ENCODE measurements at regions of chr3 and their contacts with region 1.

Region 1: DNA sequence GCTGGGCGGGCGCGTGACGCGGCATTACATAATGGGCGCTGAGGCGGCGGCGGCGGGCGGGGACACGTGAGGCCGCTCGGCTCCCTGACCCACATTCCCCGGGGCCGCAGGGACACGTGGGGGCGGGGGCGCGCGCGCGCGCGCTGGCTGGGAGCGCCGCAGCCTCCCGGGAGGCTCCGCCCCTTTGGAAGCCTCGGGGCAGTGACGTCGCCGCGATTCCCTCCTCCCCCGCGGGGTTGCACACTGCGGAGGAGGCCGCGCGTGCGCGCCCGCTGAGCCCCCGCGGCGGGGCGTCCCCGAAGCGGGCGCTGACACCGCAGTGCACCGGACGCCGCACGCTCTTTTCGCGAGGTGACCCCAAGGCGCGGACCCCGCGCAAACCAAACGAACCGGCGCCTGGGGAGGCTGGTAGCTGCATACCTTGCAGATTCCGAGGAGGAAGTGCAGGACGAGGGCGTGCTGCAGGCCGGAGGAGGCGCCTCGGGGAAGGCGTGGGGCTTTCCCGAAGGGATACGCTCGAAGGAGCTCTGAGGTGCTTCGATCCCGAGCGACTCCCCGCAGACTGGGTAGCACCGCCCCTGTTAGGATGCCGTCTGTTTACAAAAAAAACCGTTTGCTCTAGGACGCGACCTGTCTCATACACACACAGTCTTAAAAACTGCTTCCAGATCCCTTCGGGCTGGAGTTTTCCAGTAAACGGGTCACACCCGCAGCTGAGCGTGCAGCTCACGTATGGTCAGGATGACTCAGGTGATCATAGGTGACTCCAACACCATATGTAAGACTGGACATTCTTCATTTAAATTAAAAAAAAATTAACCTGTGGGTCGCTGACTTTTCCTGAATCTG is 1.0 kb downstream of the NR1D2 start:
- DNase-seq: peak; percentile 82
- ATAC-seq: peak; percentile 78
- H3K4me3 ChIP-seq: peak overlapping the region; percentile 67 to 72
- H3K27ac ChIP-seq: peak overlapping the region; percentile 89
- H3K4me1 ChIP-seq: peaks cover 46 to 56% of the 10 kb centered on the region in 2 experiments
- H3K27me3 ChIP-seq: no peaks in the 10 kb centered on the region
- CTCF ChIP-seq: no peak
- POLR2A ChIP-seq: no peak
- RAD21 ChIP-seq: no peak

Region 2: DNA sequence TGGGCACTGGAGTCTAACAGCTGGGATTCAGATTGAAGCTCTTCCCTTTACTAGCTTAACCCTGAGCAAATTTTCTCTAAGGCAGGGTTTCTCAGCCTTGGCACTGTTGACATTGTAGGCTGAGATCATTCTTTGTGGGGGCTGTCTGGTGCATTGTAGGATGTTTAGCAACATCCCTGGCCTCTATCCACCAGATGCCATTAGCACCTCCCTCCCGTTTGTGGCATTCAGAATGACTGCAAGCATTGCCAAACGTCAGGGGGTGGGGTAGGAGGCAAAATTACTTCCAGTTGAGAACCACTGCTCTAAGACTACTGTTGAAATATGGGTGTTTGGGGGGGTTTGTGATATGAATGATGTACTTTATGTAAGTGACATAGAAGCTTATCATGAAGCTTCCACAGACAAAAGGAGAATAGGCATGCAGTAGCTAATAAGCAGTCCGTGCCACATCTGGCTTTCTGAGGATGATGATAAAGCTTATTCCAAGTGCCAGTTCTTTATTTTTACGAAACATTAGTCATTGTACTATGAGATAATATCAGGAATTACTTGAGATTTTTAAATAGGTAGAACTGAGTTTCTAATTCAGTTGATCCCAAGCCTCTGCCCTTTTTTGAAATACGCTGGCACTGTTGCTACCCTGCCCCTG is 68.7 kb before region 1 on chr3:
- CTCF ChIA-PET with region 1: no interaction called
- POLR2A ChIA-PET with region 1: no interaction called
- RAD21 ChIA-PET with region 1: no interaction called
- intact Hi-C with region 1: no loop called
- DNase-seq: no peak
- ATAC-seq: no peak
- H3K4me3 ChIP-seq: no peak overlapping the region
- H3K27ac ChIP-seq: no peak overlapping the region
- H3K4me1 ChIP-seq: no peaks in the 10 kb centered on the region
- H3K27me3 ChIP-seq: no peaks in the 10 kb centered on the region
- CTCF ChIP-seq: no peak
- POLR2A ChIP-seq: no peak
- RAD21 ChIP-seq: no peak

Region 3: GRCh38 chr3:23916886-23917678 is 29.0 kb before region 1 on chr3 and contains the starts of genes NKIRAS1 and RPL15:
- CTCF ChIA-PET with region 1: no interaction called
- POLR2A ChIA-PET with region 1: interaction called, 20 read pairs
- RAD21 ChIA-PET with region 1: no interaction called
- intact Hi-C with region 1: loop called (anchors 1 kb)
- DNase-seq: peak; percentile 91
- ATAC-seq: peak; percentile 91
- H3K4me3 ChIP-seq: peak within 1 kb of the TSS; percentile 87 to 97
- H3K27ac ChIP-seq: peak within 1 kb of the TSS; percentile 83
- H3K4me1 ChIP-seq: peaks cover 14 to 23% of the 10 kb centered on the region in 2 experiments; a peak in 3 of 4 replicates
- H3K27me3 ChIP-seq: no peaks in the 10 kb centered on the region
- CTCF ChIP-seq: peak in 1 of 3 experiments; percentile 38; a peak in 2 of 6 replicates
- POLR2A ChIP-seq: peak; percentile 99
- RAD21 ChIP-seq: no peak
- total RNA-seq, gene NKIRAS1: 12.0 TPM
- total RNA-seq, gene RPL15: 2,177 TPM

Region 4: DNA sequence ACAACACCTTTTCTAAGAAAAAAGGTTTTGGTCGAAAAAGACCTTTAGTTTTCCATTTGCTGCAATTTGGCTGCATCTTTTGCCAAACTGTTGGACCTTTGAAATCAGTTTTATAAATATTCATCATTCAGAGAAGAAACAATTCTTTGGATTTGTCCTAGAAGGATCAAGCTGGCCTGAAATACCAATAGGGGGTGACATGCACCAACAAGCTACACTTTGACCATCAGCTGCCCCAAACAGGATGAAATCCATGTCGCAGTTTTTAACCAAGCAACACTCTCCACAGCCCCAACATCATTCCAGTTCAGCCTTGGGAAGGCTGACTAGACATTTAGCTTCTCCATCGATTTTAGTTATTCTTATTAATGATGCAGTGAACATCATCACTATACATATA is 19.4 kb before region 1 on chr3:
- CTCF ChIA-PET with region 1: no interaction called
- POLR2A ChIA-PET with region 1: interaction called, 4 read pairs
- RAD21 ChIA-PET with region 1: no interaction called
- intact Hi-C with region 1: loop called (anchors 2 kb)
- DNase-seq: no peak
- ATAC-seq: peak; percentile 37; the same call in 1 of the 2 replicates
- H3K4me3 ChIP-seq: no peak overlapping the region
- H3K27ac ChIP-seq: no peak overlapping the region
- H3K4me1 ChIP-seq: peaks cover 13 to 16% of the 10 kb centered on the region in 2 experiments
- H3K27me3 ChIP-seq: no peaks in the 10 kb centered on the region
- CTCF ChIP-seq: peak; percentile 26 to 39 (median 26); a peak in 3 of 6 replicates
- POLR2A ChIP-seq: no peak
- RAD21 ChIP-seq: peak; percentile 74

Region 5: GRCh38 chr3:23959135-23959900 is 13.2 kb after region 1 on chr3:
- CTCF ChIA-PET with region 1: no interaction called
- POLR2A ChIA-PET with region 1: interaction called, 4 read pairs
- RAD21 ChIA-PET with region 1: no interaction called
- intact Hi-C with region 1: loop called (anchors 2 kb)
- DNase-seq: peak; percentile 63
- ATAC-seq: peak; percentile 82
- H3K4me3 ChIP-seq: peak overlapping the region in 1 of 2 experiments; percentile 2; a peak in 1 of 4 replicates
- H3K27ac ChIP-seq: peak overlapping the region; percentile 52
- H3K4me1 ChIP-seq: peaks cover 26 to 52% of the 10 kb centered on the region in 2 experiments
- H3K27me3 ChIP-seq: no peaks in the 10 kb centered on the region
- CTCF ChIP-seq: no peak
- POLR2A ChIP-seq: no peak
- RAD21 ChIP-seq: no peak

Measured in HCT116 (cell line).